ENCODE measurements at regions of chr12 and their contacts with region 1.

Region 1: DNA sequence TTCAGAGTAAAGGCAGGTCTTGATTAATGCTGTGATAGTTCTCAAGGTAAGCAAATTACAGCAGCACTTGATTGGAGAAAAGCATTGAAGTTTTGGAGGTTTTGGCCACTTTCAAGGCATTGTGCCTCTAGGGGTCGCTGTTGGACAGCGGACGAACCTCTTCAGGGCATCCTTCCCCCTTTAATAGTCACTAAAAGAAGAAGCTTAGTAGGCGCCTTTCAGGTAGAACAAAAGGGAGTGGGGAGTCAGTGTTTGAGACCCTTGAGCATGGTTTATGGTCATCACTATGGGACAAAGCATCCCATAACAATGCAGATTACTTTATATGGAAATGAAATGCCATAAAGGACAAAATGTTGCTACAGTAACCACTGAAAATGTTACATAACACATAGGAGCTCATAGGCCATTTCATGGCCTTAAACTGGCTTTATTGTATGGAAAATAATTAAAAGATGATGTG is 199.5 kb upstream of the DCN start:
- DNase-seq: peak; percentile 89
- ATAC-seq: peak; percentile 82
- H3K4me3 ChIP-seq: peak overlapping the region; percentile 11 to 81 (median 47)
- H3K4me3 Mint-ChIP-seq: peak overlapping the region; percentile 83
- H3K27ac ChIP-seq: peak overlapping the region in 1 of 2 donors; percentile 20
- H3K27ac Mint-ChIP-seq: peak overlapping the region; percentile 28
- H3K4me1 ChIP-seq: peaks cover 5 to 9% of the 10 kb centered on the region in 2 donors
- H3K4me1 Mint-ChIP-seq: peaks cover 10% of the 10 kb centered on the region
- H3K27me3 ChIP-seq: no peaks in the 10 kb centered on the region
- H3K27me3 Mint-ChIP-seq: peaks cover 8% of the 10 kb centered on the region
- CTCF ChIP-seq: peak; percentile 91

Region 2: DNA sequence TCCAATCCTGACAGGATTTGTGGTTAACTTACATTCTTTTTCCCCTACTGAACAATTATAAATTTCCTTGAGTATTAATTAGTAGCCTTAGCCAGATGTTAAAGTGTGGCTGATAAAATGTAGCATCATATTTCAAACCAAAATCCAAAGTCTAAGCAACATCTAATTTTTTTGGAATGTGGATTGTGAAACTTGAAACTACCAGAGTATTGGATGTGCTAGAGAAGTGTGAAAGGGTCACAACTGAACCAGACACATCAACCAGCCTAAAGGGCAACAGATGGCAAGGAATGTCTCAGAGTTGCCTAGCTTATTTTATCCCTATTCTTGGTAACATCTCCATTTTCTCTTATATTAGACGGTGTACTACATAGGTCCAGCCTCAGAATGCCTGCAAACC is 46.4 kb before region 1 on chr12:
- CTCF ChIA-PET with region 1: no interaction called
- POLR2A ChIA-PET with region 1: no interaction called
- intact Hi-C with region 1: no loop called
- DNase-seq: no peak
- ATAC-seq: no peak
- H3K4me3 ChIP-seq: no peak overlapping the region
- H3K4me3 Mint-ChIP-seq: no peak overlapping the region
- H3K27ac ChIP-seq: no peak overlapping the region
- H3K27ac Mint-ChIP-seq: no peak overlapping the region
- H3K4me1 ChIP-seq: no peaks in the 10 kb centered on the region
- H3K4me1 Mint-ChIP-seq: no peaks in the 10 kb centered on the region
- H3K27me3 ChIP-seq: no peaks in the 10 kb centered on the region
- H3K27me3 Mint-ChIP-seq: peaks cover 19% of the 10 kb centered on the region
- CTCF ChIP-seq: no peak

Region 3: DNA sequence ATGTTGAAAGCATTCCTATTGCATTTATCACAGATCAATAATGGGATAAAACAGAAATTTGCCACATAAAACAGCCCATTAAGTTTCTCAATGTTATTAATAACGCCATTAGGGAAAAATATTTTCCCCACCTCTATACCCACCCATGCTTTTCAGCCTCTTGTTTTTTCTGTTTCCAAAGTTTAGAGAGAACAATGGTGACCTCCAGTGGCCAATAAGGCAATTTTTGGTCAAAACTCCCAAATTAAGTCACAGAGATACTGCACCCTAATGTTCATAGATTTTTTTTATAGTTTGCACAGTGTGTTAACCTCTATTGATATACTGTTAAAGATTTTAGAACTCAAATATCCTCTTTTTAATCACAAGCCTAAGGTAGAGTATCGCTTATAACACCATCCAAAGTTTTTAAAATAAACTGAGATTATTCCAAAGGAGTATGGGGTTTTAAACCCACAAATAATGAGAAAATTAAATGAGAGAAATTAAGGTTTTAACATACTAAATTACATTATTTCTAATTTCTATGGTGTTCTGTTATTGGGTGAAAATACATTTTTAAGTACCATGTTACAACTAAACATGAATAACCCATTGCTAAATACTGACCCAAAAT is 14.8 kb before region 1 on chr12:
- CTCF ChIA-PET with region 1: interaction called, 23 read pairs
- POLR2A ChIA-PET with region 1: no interaction called
- intact Hi-C with region 1: no loop called
- DNase-seq: no peak
- ATAC-seq: no peak
- H3K4me3 ChIP-seq: no peak overlapping the region
- H3K4me3 Mint-ChIP-seq: no peak overlapping the region
- H3K27ac ChIP-seq: no peak overlapping the region
- H3K27ac Mint-ChIP-seq: no peak overlapping the region
- H3K4me1 ChIP-seq: peaks cover 0 to 4% of the 10 kb centered on the region in 2 donors
- H3K4me1 Mint-ChIP-seq: peaks cover 7% of the 10 kb centered on the region
- H3K27me3 ChIP-seq: no peaks in the 10 kb centered on the region
- H3K27me3 Mint-ChIP-seq: peaks cover 8% of the 10 kb centered on the region
- CTCF ChIP-seq: peak; percentile 56

Region 4: GRCh38 chr12:91577586-91578539 is 195.8 kb after region 1 on chr12:
- CTCF ChIA-PET with region 1: interaction called, 5 read pairs
- POLR2A ChIA-PET with region 1: no interaction called
- intact Hi-C with region 1: loop called (anchors 5 kb)
- DNase-seq: peak; percentile 45
- ATAC-seq: peak; percentile 82
- H3K4me3 ChIP-seq: peak overlapping the region in 2 of 5 experiments; percentile 28 to 51
- H3K4me3 Mint-ChIP-seq: peak overlapping the region; percentile 68
- H3K27ac ChIP-seq: no peak overlapping the region
- H3K27ac Mint-ChIP-seq: no peak overlapping the region
- H3K4me1 ChIP-seq: peaks cover 0 to 5% of the 10 kb centered on the region in 2 donors
- H3K4me1 Mint-ChIP-seq: peaks cover 4% of the 10 kb centered on the region
- H3K27me3 ChIP-seq: peaks cover 0 to under 1% (median 0%) of the 10 kb centered on the region in 4 experiments
- H3K27me3 Mint-ChIP-seq: peaks cover 20% of the 10 kb centered on the region
- CTCF ChIP-seq: peak; percentile 92

Region 5: GRCh38 chr12:92136965-92137721 is 755.0 kb after region 1 on chr12:
- CTCF ChIA-PET with region 1: interaction called, 15 read pairs
- POLR2A ChIA-PET with region 1: interaction called, 4 read pairs
- intact Hi-C with region 1: no loop called
- DNase-seq: no peak
- ATAC-seq: no peak
- H3K4me3 ChIP-seq: peak overlapping the region; percentile 28 to 100 (median 96)
- H3K4me3 Mint-ChIP-seq: peak overlapping the region; percentile 98
- H3K27ac ChIP-seq: peak overlapping the region in 1 of 2 donors; percentile 13
- H3K27ac Mint-ChIP-seq: peak overlapping the region; percentile 23
- H3K4me1 ChIP-seq: peaks cover 71 to 80% of the 10 kb centered on the region in 2 donors
- H3K4me1 Mint-ChIP-seq: peaks cover 74% of the 10 kb centered on the region
- H3K27me3 ChIP-seq: no peaks in the 10 kb centered on the region
- H3K27me3 Mint-ChIP-seq: no peaks in the 10 kb centered on the region
- CTCF ChIP-seq: no peak

Region 6: GRCh38 chr12:92561543-92561899 is 1179.4 kb after region 1 on chr12:
- CTCF ChIA-PET with region 1: interaction called, 10 read pairs
- POLR2A ChIA-PET with region 1: no interaction called
- intact Hi-C with region 1: no loop called
- DNase-seq: no peak
- ATAC-seq: no peak
- H3K4me3 ChIP-seq: no peak overlapping the region
- H3K4me3 Mint-ChIP-seq: peak overlapping the region; percentile 27
- H3K27ac ChIP-seq: peak overlapping the region in 1 of 2 donors; percentile 60
- H3K27ac Mint-ChIP-seq: peak overlapping the region; percentile 50
- H3K4me1 ChIP-seq: peaks cover 53 to 62% of the 10 kb centered on the region in 2 donors
- H3K4me1 Mint-ChIP-seq: peaks cover 82% of the 10 kb centered on the region
- H3K27me3 ChIP-seq: no peaks in the 10 kb centered on the region
- H3K27me3 Mint-ChIP-seq: no peaks in the 10 kb centered on the region
- CTCF ChIP-seq: no peak

Region 7: DNA sequence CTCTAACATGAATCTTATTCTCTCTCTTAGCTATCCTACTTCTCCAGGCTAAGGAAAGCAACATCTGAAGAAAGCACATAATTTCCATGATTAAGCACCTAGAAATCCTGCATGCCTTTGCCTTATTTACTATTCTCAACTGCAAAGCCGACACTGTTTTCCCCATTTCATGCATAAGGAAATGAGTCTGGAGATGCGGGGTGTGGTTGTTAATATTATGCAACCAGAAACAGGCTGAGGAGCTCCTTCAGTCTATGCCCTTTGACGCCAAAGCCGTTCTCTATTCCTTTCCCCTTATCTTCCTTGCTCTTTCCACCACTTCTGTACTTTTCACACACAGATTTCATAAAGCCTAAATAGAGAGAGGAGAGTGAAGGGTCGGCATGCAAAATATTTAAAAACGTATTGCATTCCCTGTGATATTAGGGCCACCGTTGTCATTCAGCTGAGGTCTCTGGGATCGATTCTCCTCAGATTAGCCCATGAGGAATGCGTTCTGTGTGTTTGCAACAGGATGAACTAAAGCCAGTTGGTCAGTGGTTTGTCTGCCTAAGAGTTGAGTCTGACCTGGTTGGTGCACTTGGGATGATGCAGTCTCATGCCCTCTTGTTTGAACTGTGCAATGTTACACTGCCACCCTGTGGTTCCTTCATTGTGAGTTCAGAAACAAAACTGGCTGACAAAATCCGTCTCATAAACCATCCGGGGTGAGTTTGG is 1267.6 kb after region 1 on chr12:
- CTCF ChIA-PET with region 1: interaction called, 127 read pairs
- POLR2A ChIA-PET with region 1: no interaction called
- intact Hi-C with region 1: loop called (anchors 1 kb)
- DNase-seq: peak; percentile 76
- ATAC-seq: peak; percentile 89
- H3K4me3 ChIP-seq: no peak overlapping the region
- H3K4me3 Mint-ChIP-seq: no peak overlapping the region
- H3K27ac ChIP-seq: no peak overlapping the region
- H3K27ac Mint-ChIP-seq: no peak overlapping the region
- H3K4me1 ChIP-seq: no peaks in the 10 kb centered on the region
- H3K4me1 Mint-ChIP-seq: peaks cover 3% of the 10 kb centered on the region
- H3K27me3 ChIP-seq: no peaks in the 10 kb centered on the region
- H3K27me3 Mint-ChIP-seq: peaks cover 9% of the 10 kb centered on the region
- CTCF ChIP-seq: peak; percentile 82